ENCODE measurements at regions of chr4 and their contacts with region 1.

Region 1: GRCh38 chr4:81896936-81897335 is 425.2 kb upstream of the RASGEF1B start:
- DNase-seq: no peak
- ATAC-seq: no peak
- H3K4me3 ChIP-seq: no peak overlapping the region
- H3K4me3 Mint-ChIP-seq: no peak overlapping the region
- H3K27ac ChIP-seq: no peak overlapping the region
- H3K27ac Mint-ChIP-seq: no peak overlapping the region
- H3K4me1 ChIP-seq: peaks cover 0 to 7% of the 10 kb centered on the region in 2 experiments
- H3K4me1 Mint-ChIP-seq: peaks cover 3 to 6% (median 4%) of the 10 kb centered on the region in 3 donors
- H3K27me3 ChIP-seq: no peaks in the 10 kb centered on the region
- H3K27me3 Mint-ChIP-seq: peaks cover 0 to 4% of the 10 kb centered on the region in 2 donors

Region 2: DNA sequence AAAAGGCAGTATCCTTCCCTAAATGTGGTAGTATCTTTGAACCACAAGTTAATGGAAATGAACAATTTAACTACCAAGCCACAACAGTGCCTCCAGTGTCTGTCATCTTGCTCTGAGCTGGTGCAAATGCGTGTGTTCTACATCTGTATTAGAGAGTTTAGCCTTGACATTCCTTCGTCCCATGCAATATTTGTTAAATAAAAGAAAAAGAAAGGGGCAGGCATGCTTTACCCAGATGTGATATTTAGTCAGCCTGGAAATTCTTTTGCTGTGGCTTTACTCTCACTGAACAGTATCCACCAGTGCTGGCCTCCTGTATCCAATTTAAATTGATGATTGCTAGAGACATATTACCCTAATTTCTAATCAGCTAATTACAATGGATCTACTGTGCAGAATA is 1250.9 kb before region 1 on chr4:
- CTCF ChIA-PET with region 1: no interaction called
- POLR2A ChIA-PET with region 1: no interaction called
- DNase-seq: no peak
- ATAC-seq: no peak
- H3K4me3 ChIP-seq: no peak overlapping the region
- H3K4me3 Mint-ChIP-seq: no peak overlapping the region
- H3K27ac ChIP-seq: no peak overlapping the region
- H3K27ac Mint-ChIP-seq: no peak overlapping the region
- H3K4me1 ChIP-seq: no peaks in the 10 kb centered on the region
- H3K4me1 Mint-ChIP-seq: no peaks in the 10 kb centered on the region
- H3K27me3 ChIP-seq: no peaks in the 10 kb centered on the region
- H3K27me3 Mint-ChIP-seq: no peaks in the 10 kb centered on the region

Region 3: DNA sequence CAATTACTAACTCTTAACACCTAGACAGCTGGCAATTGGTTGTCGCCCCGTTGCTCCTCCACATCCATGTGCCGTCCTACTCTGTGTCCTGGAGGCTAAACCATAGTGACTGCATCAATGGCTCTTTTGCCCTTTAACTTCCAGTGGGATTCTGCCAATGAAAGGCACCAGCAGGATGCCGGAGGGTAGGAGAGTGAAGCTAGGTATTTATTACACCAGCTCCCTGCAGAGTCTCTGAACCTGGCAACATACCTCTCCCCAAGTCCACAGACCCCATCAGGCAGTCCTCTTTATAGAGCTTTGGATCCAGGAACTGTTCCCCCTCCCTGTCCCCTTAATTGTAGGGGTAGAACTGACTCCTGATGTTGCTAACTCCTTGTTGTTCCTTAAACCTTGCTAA is 50.1 kb after region 1 on chr4:
- CTCF ChIA-PET with region 1: interaction called in 1 of 2 experiments, 10 read pairs
- POLR2A ChIA-PET with region 1: no interaction called
- DNase-seq: no peak
- ATAC-seq: no peak
- H3K4me3 ChIP-seq: no peak overlapping the region
- H3K4me3 Mint-ChIP-seq: no peak overlapping the region
- H3K27ac ChIP-seq: no peak overlapping the region
- H3K27ac Mint-ChIP-seq: no peak overlapping the region
- H3K4me1 ChIP-seq: no peaks in the 10 kb centered on the region
- H3K4me1 Mint-ChIP-seq: no peaks in the 10 kb centered on the region
- H3K27me3 ChIP-seq: no peaks in the 10 kb centered on the region
- H3K27me3 Mint-ChIP-seq: peaks cover 11 to 26% of the 10 kb centered on the region in 2 donors